CD4-positive, alpha-beta memory T cell (primary cell): ENCODE measurements at regions of chr7 and their contacts with region 1.

Region 1: GRCh38 chr7:65373608-65374351 is at the start of gene ZNF92:
- DNase-seq: peak; percentile 93 to 97 (median 94)
- H3K4me3 ChIP-seq: peak within 1 kb of the TSS; percentile 93 to 97
- H3K4me3 Mint-ChIP-seq: peak within 1 kb of the TSS; percentile 91 to 99 (median 97)
- H3K27ac ChIP-seq: peak within 1 kb of the TSS; percentile 83
- H3K27ac Mint-ChIP-seq: peak within 1 kb of the TSS; percentile 90 to 97 (median 93)
- H3K4me1 ChIP-seq: peaks cover 37% of the 10 kb centered on the region
- H3K4me1 Mint-ChIP-seq: peaks cover 34 to 59% (median 45%) of the 10 kb centered on the region in 4 donors
- H3K27me3 ChIP-seq: no peaks in the 10 kb centered on the region
- H3K27me3 Mint-ChIP-seq: no peaks in the 10 kb centered on the region
- total RNA-seq, gene ZNF92: 31.1 to 35.3 TPM

Region 2: DNA sequence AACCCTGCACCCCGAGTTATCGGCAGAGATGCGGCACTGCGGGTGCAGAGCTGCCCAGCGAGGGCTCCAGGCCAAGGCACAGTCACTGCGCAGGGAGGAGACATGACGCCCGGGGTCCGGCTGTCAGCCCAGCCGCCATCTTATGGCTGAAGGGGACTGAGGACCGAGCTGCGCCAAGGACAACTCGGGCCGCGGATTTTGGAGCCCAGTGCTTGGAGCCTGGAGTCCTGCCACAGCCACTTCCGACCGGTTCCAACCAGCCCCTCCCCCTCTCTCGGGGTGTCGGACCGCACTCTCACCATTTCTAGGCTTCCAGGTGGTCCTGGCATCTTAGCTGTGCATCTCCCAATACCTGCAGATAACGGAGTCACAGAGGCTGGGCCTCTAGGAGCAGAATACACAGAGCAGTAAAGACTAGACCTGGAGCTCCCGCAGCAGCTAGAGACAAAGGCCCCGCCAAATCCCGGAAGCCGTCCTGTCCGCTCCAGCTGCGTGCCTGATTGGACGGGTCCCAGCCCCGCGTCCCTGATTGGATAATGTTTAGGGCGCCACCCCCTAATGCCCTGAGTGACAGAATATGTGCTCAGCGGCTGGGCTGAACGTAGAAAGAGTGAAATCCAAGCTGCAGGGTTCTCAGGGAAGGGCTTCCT is 811.0 kb before region 1 on chr7 and contains the start of gene ZNF680:
- CTCF ChIA-PET with region 1: interaction called, 3 read pairs
- POLR2A ChIA-PET with region 1: no interaction called
- intact Hi-C with region 1: loop called (anchors 5 kb)
- DNase-seq: peak; percentile 89 to 93 (median 90)
- H3K4me3 ChIP-seq: peak within 1 kb of the TSS; percentile 47 to 70
- H3K4me3 Mint-ChIP-seq: peak within 1 kb of the TSS; percentile 100
- H3K27ac ChIP-seq: peak within 1 kb of the TSS; percentile 57
- H3K27ac Mint-ChIP-seq: peak within 1 kb of the TSS; percentile 97 to 99 (median 99)
- H3K4me1 ChIP-seq: peaks cover 20% of the 10 kb centered on the region
- H3K4me1 Mint-ChIP-seq: peaks cover 21 to 46% (median 36%) of the 10 kb centered on the region in 4 donors
- H3K27me3 ChIP-seq: no peaks in the 10 kb centered on the region
- H3K27me3 Mint-ChIP-seq: no peaks in the 10 kb centered on the region
- total RNA-seq, gene ZNF680: 17.7 to 19.6 TPM

Region 3: GRCh38 chr7:64863021-64863420 is 510.8 kb before region 1 on chr7:
- CTCF ChIA-PET with region 1: no interaction called
- POLR2A ChIA-PET with region 1: no interaction called
- intact Hi-C with region 1: no loop called
- DNase-seq: no peak
- H3K4me3 ChIP-seq: no peak overlapping the region
- H3K4me3 Mint-ChIP-seq: no peak overlapping the region
- H3K27ac ChIP-seq: no peak overlapping the region
- H3K27ac Mint-ChIP-seq: no peak overlapping the region
- H3K4me1 ChIP-seq: no peaks in the 10 kb centered on the region
- H3K4me1 Mint-ChIP-seq: no peaks in the 10 kb centered on the region
- H3K27me3 ChIP-seq: no peaks in the 10 kb centered on the region
- H3K27me3 Mint-ChIP-seq: peaks cover 0 to 4% of the 10 kb centered on the region in 2 donors

Region 4: GRCh38 chr7:64902806-64903721 is 470.7 kb before region 1 on chr7 and contains the start of gene ZNF273:
- CTCF ChIA-PET with region 1: no interaction called
- POLR2A ChIA-PET with region 1: interaction called, 3 read pairs
- intact Hi-C with region 1: loop called (anchors 5 kb)
- DNase-seq: peak; percentile 89 to 95 (median 90)
- H3K4me3 ChIP-seq: peak within 1 kb of the TSS; percentile 67 to 71
- H3K4me3 Mint-ChIP-seq: peak within 1 kb of the TSS; percentile 96 to 98 (median 98)
- H3K27ac ChIP-seq: peak within 1 kb of the TSS; percentile 79
- H3K27ac Mint-ChIP-seq: peak within 1 kb of the TSS; percentile 92 to 97 (median 96)
- H3K4me1 ChIP-seq: peaks cover 43% of the 10 kb centered on the region
- H3K4me1 Mint-ChIP-seq: peaks cover 32 to 53% (median 39%) of the 10 kb centered on the region in 4 donors
- H3K27me3 ChIP-seq: no peaks in the 10 kb centered on the region
- H3K27me3 Mint-ChIP-seq: no peaks in the 10 kb centered on the region
- total RNA-seq, gene ZNF273: 8.3 to 8.9 TPM

Region 5: GRCh38 chr7:65037740-65038678 is 335.8 kb before region 1 on chr7:
- CTCF ChIA-PET with region 1: no interaction called
- POLR2A ChIA-PET with region 1: interaction called, 6 read pairs
- intact Hi-C with region 1: loop called (anchors 1 kb)
- DNase-seq: peak; percentile 90 to 94 (median 92)
- H3K4me3 ChIP-seq: peak overlapping the region in 1 of 2 donors; percentile 43
- H3K4me3 Mint-ChIP-seq: peak overlapping the region; percentile 68 to 85 (median 81)
- H3K27ac ChIP-seq: peak overlapping the region; percentile 56
- H3K27ac Mint-ChIP-seq: peak overlapping the region; percentile 79 to 93 (median 90)
- H3K4me1 ChIP-seq: peaks cover 14% of the 10 kb centered on the region
- H3K4me1 Mint-ChIP-seq: peaks cover 10 to 17% (median 14%) of the 10 kb centered on the region in 4 donors
- H3K27me3 ChIP-seq: no peaks in the 10 kb centered on the region
- H3K27me3 Mint-ChIP-seq: no peaks in the 10 kb centered on the region

Region 6: GRCh38 chr7:65459438-65459837 is 85.7 kb after region 1 on chr7:
- CTCF ChIA-PET with region 1: no interaction called
- POLR2A ChIA-PET with region 1: no interaction called
- intact Hi-C with region 1: no loop called
- DNase-seq: no peak
- H3K4me3 ChIP-seq: no peak overlapping the region
- H3K4me3 Mint-ChIP-seq: no peak overlapping the region
- H3K27ac ChIP-seq: no peak overlapping the region
- H3K27ac Mint-ChIP-seq: no peak overlapping the region
- H3K4me1 ChIP-seq: no peaks in the 10 kb centered on the region
- H3K4me1 Mint-ChIP-seq: peaks cover 5 to 20% (median 16%) of the 10 kb centered on the region in 4 donors
- H3K27me3 ChIP-seq: no peaks in the 10 kb centered on the region
- H3K27me3 Mint-ChIP-seq: peaks cover 0 to 2% of the 10 kb centered on the region in 2 donors

Region 7: GRCh38 chr7:65475734-65476319 is 102.0 kb after region 1 on chr7:
- CTCF ChIA-PET with region 1: no interaction called
- POLR2A ChIA-PET with region 1: interaction called, 23 read pairs
- intact Hi-C with region 1: no loop called
- DNase-seq: peak; percentile 35 to 49 (median 42)
- H3K4me3 ChIP-seq: peak overlapping the region in 1 of 2 donors; percentile 34
- H3K4me3 Mint-ChIP-seq: peak overlapping the region; percentile 7 to 88 (median 76)
- H3K27ac ChIP-seq: no peak overlapping the region
- H3K27ac Mint-ChIP-seq: peak overlapping the region; percentile 74 to 92 (median 84)
- H3K4me1 ChIP-seq: peaks cover 52% of the 10 kb centered on the region
- H3K4me1 Mint-ChIP-seq: peaks cover 33 to 69% (median 58%) of the 10 kb centered on the region in 4 donors
- H3K27me3 ChIP-seq: no peaks in the 10 kb centered on the region
- H3K27me3 Mint-ChIP-seq: peaks cover 0 to 3% of the 10 kb centered on the region in 2 donors

Region 8: DNA sequence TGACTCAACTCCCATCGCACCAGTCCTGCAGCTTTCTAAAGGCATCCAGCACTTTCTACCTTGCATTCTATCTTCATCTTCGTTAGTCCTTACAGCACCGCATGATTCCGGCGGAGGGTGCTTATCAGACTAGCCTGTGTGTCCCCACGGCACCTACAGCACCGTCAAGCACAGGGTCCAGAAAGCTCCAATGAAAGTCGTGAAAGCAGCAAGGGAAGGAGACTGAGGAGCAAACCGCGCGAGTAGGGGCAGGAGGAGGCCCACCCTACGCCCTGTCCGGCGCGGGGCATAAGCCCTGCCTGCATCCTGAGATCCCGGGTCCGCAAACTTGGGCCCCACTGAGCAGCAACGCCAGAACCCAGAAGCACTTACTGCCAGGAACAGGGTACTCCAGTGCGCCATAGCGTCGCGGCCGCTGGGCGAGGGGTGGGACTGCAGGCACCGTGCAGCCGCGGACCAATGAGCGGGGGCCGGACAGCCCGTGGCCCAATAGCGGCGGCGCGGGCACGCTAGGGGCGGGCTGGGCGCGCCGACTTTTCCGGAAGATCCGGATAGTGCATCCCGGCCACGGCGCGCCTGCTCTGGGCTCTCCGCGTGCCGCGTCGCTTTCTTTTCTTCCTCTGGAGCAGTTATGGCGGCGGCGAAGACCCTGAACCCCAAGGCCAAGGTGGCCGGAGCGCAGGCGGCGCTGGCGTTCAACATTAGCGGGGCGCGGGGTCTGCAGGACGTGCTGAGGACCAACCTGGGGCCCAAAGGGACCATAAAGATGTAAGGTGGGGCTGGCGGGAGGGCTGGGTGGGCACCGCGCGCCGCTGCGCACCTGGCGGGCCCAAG is 376.9 kb after region 1 on chr7:
- CTCF ChIA-PET with region 1: no interaction called
- POLR2A ChIA-PET with region 1: no interaction called
- intact Hi-C with region 1: loop called (anchors 10 kb)
- DNase-seq: peak; percentile 83 to 86 (median 85)
- H3K4me3 ChIP-seq: peak overlapping the region; percentile 91 to 99
- H3K4me3 Mint-ChIP-seq: peak overlapping the region; percentile 93 to 98 (median 96)
- H3K27ac ChIP-seq: peak overlapping the region; percentile 60
- H3K27ac Mint-ChIP-seq: peak overlapping the region; percentile 87 to 97 (median 94)
- H3K4me1 ChIP-seq: peaks cover 24% of the 10 kb centered on the region
- H3K4me1 Mint-ChIP-seq: peaks cover 7 to 45% (median 27%) of the 10 kb centered on the region in 4 donors
- H3K27me3 ChIP-seq: no peaks in the 10 kb centered on the region
- H3K27me3 Mint-ChIP-seq: no peaks in the 10 kb centered on the region